CD4-positive, alpha-beta memory T cell (primary cell): ENCODE measurements at regions of chr5 and their contacts with region 1.

Region 1: DNA sequence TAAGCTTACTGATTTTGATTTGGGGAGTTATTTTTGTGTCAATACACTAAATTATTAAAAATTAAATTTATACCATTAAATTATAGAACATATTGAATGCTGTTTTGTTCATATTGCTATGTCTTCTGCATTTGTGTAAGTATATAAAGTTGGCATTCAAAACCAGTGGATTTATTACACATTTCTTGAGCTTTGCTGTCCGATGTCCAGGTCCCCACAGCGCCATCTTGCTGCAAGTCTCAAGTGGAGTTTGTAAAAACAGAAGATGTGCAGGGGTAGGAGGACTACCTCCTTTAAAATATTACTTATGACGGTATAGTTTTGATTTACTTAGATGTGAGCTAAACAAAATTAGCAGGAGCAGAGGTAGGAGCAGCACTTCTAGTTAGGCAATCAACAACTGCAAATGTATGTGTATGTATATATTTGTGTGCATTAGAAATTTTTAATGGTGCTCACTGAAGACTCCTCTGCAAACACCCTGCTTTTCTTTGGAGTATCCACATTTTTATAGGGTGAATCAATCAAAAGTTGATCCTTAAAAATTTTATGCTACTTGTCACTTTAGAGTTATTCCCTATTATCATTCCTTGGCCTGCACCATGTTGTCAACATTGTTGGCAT is 37.4 kb downstream of the CPEB4 start:
- DNase-seq: peak; percentile 18 to 40 (median 38)
- H3K4me3 ChIP-seq: no peak overlapping the region
- H3K4me3 Mint-ChIP-seq: no peak overlapping the region
- H3K27ac ChIP-seq: no peak overlapping the region
- H3K27ac Mint-ChIP-seq: no peak overlapping the region
- H3K4me1 ChIP-seq: peaks cover 4% of the 10 kb centered on the region
- H3K4me1 Mint-ChIP-seq: peaks cover 5 to 15% (median 10%) of the 10 kb centered on the region in 4 donors
- H3K27me3 ChIP-seq: no peaks in the 10 kb centered on the region
- H3K27me3 Mint-ChIP-seq: no peaks in the 10 kb centered on the region

Region 2: GRCh38 chr5:173887610-173888472 is 37.7 kb before region 1 on chr5 and contains the start of gene CPEB4:
- CTCF ChIA-PET with region 1: interaction called, 13 read pairs
- POLR2A ChIA-PET with region 1: interaction called, 5 read pairs
- intact Hi-C with region 1: no loop called
- DNase-seq: peak; percentile 96 to 99 (median 98)
- H3K4me3 ChIP-seq: peak within 1 kb of the TSS; percentile 52 to 68
- H3K4me3 Mint-ChIP-seq: peak within 1 kb of the TSS; percentile 95 to 99 (median 98)
- H3K27ac ChIP-seq: peak within 1 kb of the TSS; percentile 68
- H3K27ac Mint-ChIP-seq: peak within 1 kb of the TSS; percentile 91 to 99 (median 98)
- H3K4me1 ChIP-seq: peaks cover 81% of the 10 kb centered on the region
- H3K4me1 Mint-ChIP-seq: peaks cover 69 to 92% (median 76%) of the 10 kb centered on the region in 4 donors
- H3K27me3 ChIP-seq: no peaks in the 10 kb centered on the region
- H3K27me3 Mint-ChIP-seq: no peaks in the 10 kb centered on the region
- total RNA-seq, gene CPEB4: 17.1 to 18.3 TPM

Region 3: DNA sequence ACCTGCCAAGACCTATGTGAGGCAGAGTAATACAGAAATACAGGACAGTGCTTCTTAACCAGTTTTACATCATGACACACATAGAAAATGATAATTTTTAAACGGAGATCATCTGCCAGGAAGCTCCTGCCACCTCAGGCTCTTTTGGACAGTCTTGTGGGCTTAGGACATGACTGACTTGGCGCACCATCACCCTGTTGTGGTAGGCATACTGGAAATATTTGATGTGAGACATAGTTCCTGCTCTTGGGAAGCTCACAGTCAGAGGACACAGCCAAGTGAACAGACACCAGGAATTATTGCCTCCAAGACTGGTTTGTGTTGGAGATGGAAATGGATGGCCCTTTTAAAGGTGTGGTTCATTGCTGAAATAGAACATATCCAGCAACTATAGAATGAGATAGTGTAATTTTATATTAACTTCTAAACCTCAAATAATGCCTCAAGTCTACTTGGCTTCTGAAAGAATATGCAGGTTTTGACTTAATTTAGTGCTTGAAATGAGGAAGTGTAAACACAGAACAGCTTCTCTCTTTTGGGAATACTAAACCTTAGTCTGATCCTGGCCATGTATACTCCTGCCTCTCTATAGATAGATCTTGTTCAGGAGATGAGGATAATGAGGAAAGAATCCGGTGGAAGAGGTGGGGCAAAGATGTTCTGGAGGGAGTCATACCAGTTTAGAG is 17.7 kb before region 1 on chr5:
- CTCF ChIA-PET with region 1: interaction called, 13 read pairs
- POLR2A ChIA-PET with region 1: no interaction called
- intact Hi-C with region 1: no loop called
- DNase-seq: no peak
- H3K4me3 ChIP-seq: no peak overlapping the region
- H3K4me3 Mint-ChIP-seq: no peak overlapping the region
- H3K27ac ChIP-seq: no peak overlapping the region
- H3K27ac Mint-ChIP-seq: peak overlapping the region in 2 of 7 donors; percentile 24 to 41
- H3K4me1 ChIP-seq: peaks cover 18% of the 10 kb centered on the region
- H3K4me1 Mint-ChIP-seq: peaks cover 18 to 42% (median 31%) of the 10 kb centered on the region in 4 donors
- H3K27me3 ChIP-seq: no peaks in the 10 kb centered on the region
- H3K27me3 Mint-ChIP-seq: no peaks in the 10 kb centered on the region

Region 4: GRCh38 chr5:173972925-173973615 is 47.5 kb after region 1 on chr5:
- CTCF ChIA-PET with region 1: interaction called, 13 read pairs
- POLR2A ChIA-PET with region 1: no interaction called
- intact Hi-C with region 1: no loop called
- DNase-seq: peak; percentile 64 to 73 (median 70)
- H3K4me3 ChIP-seq: peak overlapping the region in 1 of 2 donors; percentile 61
- H3K4me3 Mint-ChIP-seq: peak overlapping the region; percentile 66 to 81 (median 77)
- H3K27ac ChIP-seq: no peak overlapping the region
- H3K27ac Mint-ChIP-seq: peak overlapping the region in 1 of 7 donors; percentile 14
- H3K4me1 ChIP-seq: peaks cover 12% of the 10 kb centered on the region
- H3K4me1 Mint-ChIP-seq: peaks cover 5 to 11% (median 8%) of the 10 kb centered on the region in 4 donors
- H3K27me3 ChIP-seq: no peaks in the 10 kb centered on the region
- H3K27me3 Mint-ChIP-seq: peaks cover 10 to 12% of the 10 kb centered on the region in 2 donors